ENCODE measurements at regions of chr11 and their contacts with region 1.

Region 1: DNA sequence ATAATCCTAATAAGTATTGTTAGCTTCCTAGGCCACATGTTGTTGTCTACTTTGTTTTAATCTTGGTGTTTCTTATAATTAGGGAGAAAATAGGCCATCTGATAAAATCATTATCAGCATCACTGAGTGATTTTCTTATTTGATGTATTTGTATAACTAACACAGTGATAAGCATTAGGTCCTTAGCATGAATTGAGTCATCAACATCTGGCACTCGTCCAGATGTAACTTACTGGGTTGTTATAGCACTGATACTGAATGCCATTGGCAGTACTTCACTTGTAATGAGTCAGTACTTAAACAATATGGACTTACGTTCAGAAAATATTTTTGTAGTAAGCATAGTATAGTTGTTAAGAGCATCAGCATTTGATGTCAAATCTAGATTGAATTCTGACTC is 16.2 kb downstream of the API5 start:
- DNase-seq: peak; percentile 79
- H3K4me3 Mint-ChIP-seq: no peak overlapping the region
- H3K27ac Mint-ChIP-seq: no peak overlapping the region
- H3K4me1 Mint-ChIP-seq: no peaks in the 10 kb centered on the region
- H3K27me3 Mint-ChIP-seq: no peaks in the 10 kb centered on the region
- CTCF ChIP-seq: no peak

Region 2: GRCh38 chr11:43419460-43419859 is 91.5 kb after region 1 on chr11:
- CTCF ChIA-PET with region 1: interaction called, 6 read pairs
- POLR2A ChIA-PET with region 1: no interaction called
- intact Hi-C with region 1: loop called (anchors 5 kb)
- DNase-seq: peak; percentile 49
- H3K4me3 Mint-ChIP-seq: no peak overlapping the region
- H3K27ac Mint-ChIP-seq: no peak overlapping the region
- H3K4me1 Mint-ChIP-seq: no peaks in the 10 kb centered on the region
- H3K27me3 Mint-ChIP-seq: no peaks in the 10 kb centered on the region
- CTCF ChIP-seq: peak; percentile 49

Measured in MCF 10A (cell line).